Activated T-helper 1 cell treated with anti-CD3 and anti-CD28 coated beads, Interleukin-12 subunit alpha, Interleukin-12 subunit beta, Interleukin-2, Interleukin-4 antibody, amounts not matched to agents 30 ng/mL and 10 ng/mL and 1 ng/mL, durations not matched to agents 14 hours and 24 hours and 36 hours (primary cell): ENCODE measurements at regions of chr5 and their contacts with region 1.

Region 1: DNA sequence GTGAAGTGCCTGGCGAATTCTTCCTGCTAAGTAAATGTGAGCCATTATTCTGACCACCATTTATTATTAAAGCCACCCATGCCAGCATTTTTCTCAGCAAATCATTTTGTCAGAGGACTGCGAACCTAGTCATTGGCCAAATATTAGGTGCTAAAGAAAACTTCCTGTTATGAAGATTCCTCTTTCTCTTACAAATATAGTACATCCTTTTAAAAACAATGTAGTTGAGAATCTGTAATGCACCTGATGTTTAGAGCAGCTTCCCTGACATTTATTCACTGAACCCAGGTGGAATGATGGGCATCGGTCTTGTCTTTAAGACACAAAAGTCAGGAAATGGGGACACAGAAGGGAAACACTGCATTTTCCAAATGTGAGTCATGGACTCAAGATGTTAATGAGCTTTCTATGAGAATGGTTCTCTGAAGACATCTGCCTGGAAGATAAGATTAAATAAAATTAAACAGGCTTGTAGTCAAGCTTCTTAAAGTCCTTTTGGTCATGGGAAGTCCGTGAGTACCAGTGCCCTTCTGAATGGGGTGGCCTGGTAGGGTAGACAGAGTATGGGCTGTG is 290.6 kb downstream of the FBXL7 start:
- DNase-seq: no peak
- H3K4me3 Mint-ChIP-seq: no peak overlapping the region
- H3K27ac Mint-ChIP-seq: no peak overlapping the region
- H3K4me1 Mint-ChIP-seq: no peaks in the 10 kb centered on the region
- H3K27me3 Mint-ChIP-seq: no peaks in the 10 kb centered on the region

Region 2: GRCh38 chr5:15719784-15720183 is 70.7 kb before region 1 on chr5:
- intact Hi-C with region 1: no loop called
- DNase-seq: no peak
- H3K4me3 Mint-ChIP-seq: no peak overlapping the region
- H3K27ac Mint-ChIP-seq: no peak overlapping the region
- H3K4me1 Mint-ChIP-seq: no peaks in the 10 kb centered on the region
- H3K27me3 Mint-ChIP-seq: no peaks in the 10 kb centered on the region

Region 3: GRCh38 chr5:15821506-15821905 is 31.0 kb after region 1 on chr5:
- intact Hi-C with region 1: loop called (anchors 1 kb)
- DNase-seq: no peak
- H3K4me3 Mint-ChIP-seq: no peak overlapping the region
- H3K27ac Mint-ChIP-seq: no peak overlapping the region
- H3K4me1 Mint-ChIP-seq: no peaks in the 10 kb centered on the region
- H3K27me3 Mint-ChIP-seq: no peaks in the 10 kb centered on the region

Region 4: GRCh38 chr5:16326137-16326536 is 535.6 kb after region 1 on chr5:
- intact Hi-C with region 1: no loop called
- DNase-seq: no peak
- H3K4me3 Mint-ChIP-seq: no peak overlapping the region
- H3K27ac Mint-ChIP-seq: no peak overlapping the region
- H3K4me1 Mint-ChIP-seq: no peaks in the 10 kb centered on the region
- H3K27me3 Mint-ChIP-seq: peaks cover 1% of the 10 kb centered on the region